ENCODE measurements at regions of chr1 and their contacts with region 1.

Region 1: DNA sequence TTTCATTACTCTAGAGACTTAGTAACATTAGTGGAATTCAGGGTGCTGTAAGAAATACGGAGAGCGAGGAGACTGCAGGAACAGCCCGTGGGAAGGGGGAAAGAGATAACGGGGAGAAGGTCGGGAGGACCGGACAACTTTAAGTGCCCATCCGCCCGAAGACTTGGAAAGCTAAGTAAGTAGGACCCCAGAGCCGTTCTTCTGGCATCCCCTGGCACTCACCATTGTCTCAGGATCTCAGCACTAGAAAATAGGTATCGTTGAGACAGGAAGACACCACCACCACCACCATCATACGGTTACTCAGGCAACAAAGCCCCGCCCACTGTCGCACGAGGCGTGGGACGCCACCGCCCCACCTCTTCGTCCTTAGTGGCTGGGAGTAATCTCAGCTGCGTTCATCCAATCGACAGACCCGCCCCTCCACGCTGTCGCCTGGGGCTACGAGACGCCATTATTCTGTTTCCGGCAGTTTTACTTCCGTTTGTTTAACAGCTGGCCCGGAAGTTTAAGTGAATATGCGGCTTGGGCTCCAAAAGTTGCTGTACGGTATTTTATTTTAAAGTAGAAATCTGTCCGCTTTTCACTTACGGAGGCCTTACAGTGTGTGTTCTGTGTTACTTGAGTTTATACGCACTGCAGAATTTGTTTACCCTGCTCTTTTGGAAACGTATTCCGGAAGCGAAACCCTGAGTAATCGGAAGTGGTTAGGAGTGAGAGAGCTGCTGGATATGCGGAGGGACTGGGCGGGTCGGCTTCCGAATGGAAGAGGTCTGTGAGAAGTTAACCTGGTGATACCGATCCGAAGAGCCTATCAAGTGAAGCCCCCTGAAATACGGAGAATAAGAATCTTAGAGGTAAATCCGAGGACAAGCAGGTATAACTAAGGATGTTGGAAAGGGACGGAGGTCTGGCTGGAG is at the starts of genes BLZF1 and NME7:
- H3K4me3 Mint-ChIP-seq: no peak within 1 kb of the TSS
- H3K27ac Mint-ChIP-seq: no peak within 1 kb of the TSS
- H3K4me1 Mint-ChIP-seq: peaks cover 12% of the 10 kb centered on the region
- H3K27me3 Mint-ChIP-seq: no peaks in the 10 kb centered on the region

Region 2: DNA sequence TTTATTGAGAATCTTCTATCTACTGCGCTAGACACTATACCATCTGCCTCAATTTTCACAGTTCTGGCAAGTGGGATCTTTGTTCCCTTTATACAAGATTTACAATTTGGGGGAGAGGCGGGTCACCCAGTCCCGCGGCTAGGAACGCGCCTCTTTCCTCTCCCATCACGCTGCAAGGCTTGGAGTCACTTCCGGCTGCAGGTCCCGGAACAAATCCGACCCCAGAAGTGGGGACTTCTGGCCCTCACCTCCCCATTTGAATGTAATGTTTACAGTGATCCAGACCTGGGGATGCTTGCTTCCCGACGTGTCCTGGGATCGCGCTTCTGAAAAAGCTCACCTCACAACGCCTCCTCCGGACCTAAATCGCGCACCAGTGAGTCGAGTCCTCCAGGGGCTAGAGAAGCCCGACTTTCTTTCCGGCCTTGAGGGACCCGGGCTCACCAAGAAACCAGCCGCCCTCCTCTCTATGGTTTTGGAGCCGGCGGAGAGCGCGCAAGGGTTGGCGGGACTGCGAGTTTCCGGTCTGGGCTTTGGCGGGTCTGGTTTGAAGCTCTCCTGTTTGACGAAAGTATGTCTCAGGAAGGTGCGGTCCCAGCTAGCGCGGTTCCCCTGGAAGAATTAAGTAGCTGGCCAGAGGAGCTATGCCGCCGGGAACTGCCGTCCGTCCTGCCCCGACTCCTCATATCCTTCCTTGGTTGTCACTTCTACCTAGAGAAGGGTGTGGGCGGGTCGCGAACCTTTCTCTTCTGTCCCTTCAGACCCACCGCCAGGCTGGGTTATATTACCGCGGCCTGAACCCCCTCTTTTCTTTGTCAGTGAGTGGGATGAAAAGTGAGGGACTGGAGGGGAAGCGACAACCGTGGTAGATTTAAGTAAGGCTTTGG is 427.0 kb after region 1 on chr1 and contains the start of gene METTL18:
- intact Hi-C with region 1: loop called (anchors 5 kb)
- H3K4me3 Mint-ChIP-seq: peak within 1 kb of the TSS; percentile 92
- H3K27ac Mint-ChIP-seq: peak within 1 kb of the TSS; percentile 99
- H3K4me1 Mint-ChIP-seq: peaks cover 14% of the 10 kb centered on the region
- H3K27me3 Mint-ChIP-seq: peaks cover 2% of the 10 kb centered on the region

Region 3: DNA sequence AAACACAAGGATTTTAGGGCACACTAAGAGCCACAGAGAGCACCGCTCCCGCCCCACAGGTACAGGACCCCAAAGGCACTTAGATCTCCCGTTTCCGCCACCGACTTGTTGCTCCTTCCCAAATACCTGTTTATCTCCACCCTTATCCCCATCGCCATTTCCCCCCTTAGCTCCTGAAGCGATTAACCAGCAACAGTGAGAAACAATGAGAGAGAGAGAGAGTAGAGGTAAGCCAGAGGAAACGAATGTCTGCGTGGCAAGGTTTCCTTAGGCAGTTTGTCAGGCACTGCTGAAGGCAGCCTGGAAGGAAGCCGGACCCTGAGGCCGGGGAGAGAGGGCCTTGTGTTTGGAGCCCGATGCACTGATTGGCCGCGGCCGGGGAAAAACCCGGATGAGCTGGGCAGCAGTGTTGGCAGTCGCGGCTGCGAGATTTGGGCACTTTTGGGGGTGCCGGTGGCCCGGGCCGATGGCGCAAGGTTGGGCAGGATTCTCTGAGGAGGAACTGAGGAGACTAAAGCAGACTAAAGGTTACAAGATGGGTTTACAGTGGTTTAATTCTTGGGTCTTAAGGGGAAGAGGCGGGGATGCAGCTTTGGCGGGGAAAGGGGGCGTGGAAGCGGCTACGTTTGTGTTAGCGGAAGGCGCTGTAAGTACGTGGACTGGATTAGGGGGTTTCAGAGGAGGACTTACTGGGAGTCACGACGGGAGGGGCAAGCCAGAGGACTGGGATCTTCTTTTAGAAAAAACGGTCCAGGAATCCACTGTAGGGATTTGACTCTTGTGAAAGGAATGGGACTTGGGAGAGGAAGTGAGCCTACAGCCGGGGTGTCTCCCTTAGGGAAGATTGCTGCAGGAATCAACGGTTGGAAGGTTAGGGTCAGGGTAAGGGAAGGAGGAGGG is 1164.3 kb after region 1 on chr1 and contains the start of gene GORAB:
- intact Hi-C with region 1: loop called (anchors 10 kb)
- H3K4me3 Mint-ChIP-seq: no peak within 1 kb of the TSS
- H3K27ac Mint-ChIP-seq: no peak within 1 kb of the TSS
- H3K4me1 Mint-ChIP-seq: peaks cover 10% of the 10 kb centered on the region
- H3K27me3 Mint-ChIP-seq: peaks cover 9% of the 10 kb centered on the region

Measured in dendritic cell treated with granulocyte-macrophage colony-stimulating factor and Interleukin-4, amounts not matched to agents 40 ng/mL and 50 ng/mL, for 4 days (primary cell).